Breast epithelium (tissue), 4 donors: ENCODE measurements at regions of chr2 and their contacts with region 1.

Region 1: GRCh38 chr2:200104015-200104414 is 148.6 kb downstream of the MAIP1 start:
- DNase-seq: no peak
- H3K4me3 ChIP-seq: no peak overlapping the region
- H3K27ac ChIP-seq: no peak overlapping the region
- H3K4me1 ChIP-seq: no peaks in the 10 kb centered on the region
- H3K27me3 ChIP-seq: no peaks in the 10 kb centered on the region
- CTCF ChIP-seq: no peak
- POLR2A ChIP-seq: no peak

Region 2: GRCh38 chr2:201618744-201619662 is 1515.0 kb after region 1 on chr2:
- intact Hi-C with region 1: loop called (anchors 10 kb)
- DNase-seq: peak in 1 of 2 donors; percentile 22
- H3K4me3 ChIP-seq: peak overlapping the region in 2 of 3 donors; percentile 24 to 52
- H3K27ac ChIP-seq: no peak overlapping the region
- H3K4me1 ChIP-seq: no peaks in the 10 kb centered on the region
- H3K27me3 ChIP-seq: no peaks in the 10 kb centered on the region
- CTCF ChIP-seq: peak in 1 of 3 donors; percentile 18
- POLR2A ChIP-seq: no peak